ENCODE measurements at regions of chr9 and their contacts with region 1.

Region 1: DNA sequence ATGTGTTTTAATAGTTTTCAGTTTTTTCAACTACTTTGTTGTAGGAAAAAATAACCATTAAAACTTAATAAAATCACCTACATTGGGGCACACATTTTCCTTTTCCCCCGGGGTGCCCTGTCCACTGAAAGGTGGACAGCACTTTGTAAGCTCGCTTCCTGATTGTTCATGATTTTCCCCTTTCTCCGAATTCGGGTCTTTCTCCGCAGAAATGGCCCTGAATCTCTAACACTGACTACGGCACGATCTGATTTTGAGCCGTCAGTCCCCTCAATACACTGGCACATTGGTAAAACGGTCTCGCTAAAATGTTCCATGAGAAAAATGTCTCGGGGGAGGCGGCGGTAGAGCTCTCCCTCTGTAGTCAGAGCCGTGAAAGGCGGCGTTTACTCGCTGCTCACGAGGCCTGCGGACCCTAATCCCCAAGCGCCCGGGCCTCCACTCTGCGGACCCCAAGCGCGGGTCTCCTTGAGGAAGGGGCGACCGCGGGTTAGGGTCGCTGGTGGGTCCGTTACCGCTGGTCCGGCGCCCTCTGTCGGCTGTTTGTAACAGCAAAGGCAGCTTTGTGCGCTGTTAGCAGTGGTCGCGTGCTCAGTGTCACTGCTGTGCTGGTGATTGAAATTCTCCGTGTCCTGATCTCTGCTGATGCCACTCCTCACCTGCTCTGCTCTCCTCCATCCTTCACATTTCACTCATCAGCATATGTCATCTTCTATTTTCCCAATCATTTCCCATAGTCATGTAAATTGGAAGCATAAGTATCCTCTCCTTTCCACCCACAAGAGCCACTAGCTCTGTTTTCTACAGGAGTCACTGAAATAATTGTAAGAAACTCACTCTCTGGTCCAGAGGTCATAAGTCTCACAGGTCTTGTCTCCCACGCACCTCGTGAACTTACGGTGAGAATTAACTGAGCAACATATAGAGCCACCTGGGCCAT is 10.8 kb upstream of the IFNA2 start:
- DNase-seq: peak in 1 of 2 experiments; percentile 58
- H3K4me3 ChIP-seq: peak overlapping the region; percentile 37
- H3K4me3 Mint-ChIP-seq: peak overlapping the region; percentile 48
- H3K27ac Mint-ChIP-seq: no peak overlapping the region
- H3K4me1 ChIP-seq: no peaks in the 10 kb centered on the region
- H3K4me1 Mint-ChIP-seq: no peaks in the 10 kb centered on the region
- H3K27me3 ChIP-seq: no peaks in the 10 kb centered on the region
- H3K27me3 Mint-ChIP-seq: peaks cover 7% of the 10 kb centered on the region
- CTCF ChIP-seq: peak; percentile 70 to 84

Region 2: DNA sequence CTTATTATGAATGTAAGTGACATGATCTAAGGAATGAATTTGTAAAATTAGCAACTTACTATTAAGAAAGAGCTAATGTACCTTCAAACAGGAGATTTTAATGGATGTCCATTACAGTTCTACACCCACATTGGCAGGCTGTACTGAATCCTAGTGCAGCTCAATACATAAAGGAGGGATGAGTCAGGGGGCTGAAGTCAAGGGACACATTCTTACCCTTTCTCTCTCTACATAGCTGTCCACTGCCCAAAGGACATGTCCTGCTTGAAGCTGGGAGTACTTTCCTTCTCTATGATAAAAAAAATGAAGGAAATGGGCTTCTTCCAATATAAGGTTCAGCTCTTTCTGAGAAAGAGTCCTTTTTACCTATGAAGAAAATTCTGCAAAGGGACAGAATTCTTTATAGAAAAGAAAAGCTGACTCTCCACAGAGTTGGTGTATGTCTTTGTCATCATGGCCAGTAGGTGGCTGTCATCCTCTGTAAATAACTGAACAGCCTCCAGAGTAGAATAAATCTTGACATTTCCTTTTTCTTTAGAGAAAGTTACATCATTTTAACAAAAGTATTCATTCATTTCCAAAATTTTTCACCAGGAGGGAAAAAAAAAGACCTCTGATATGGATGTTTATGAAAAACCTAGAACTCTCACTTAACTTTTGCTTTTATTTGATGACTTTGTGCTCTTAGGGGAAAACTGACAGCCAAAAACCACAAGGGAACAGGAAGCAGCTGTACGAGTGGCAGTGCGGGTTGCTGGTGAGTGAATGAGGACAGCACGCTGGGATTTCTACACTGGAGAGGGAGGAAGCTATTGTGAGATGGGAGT is 143.1 kb before region 1 on chr9:
- CTCF ChIA-PET with region 1: interaction called, 6 read pairs
- POLR2A ChIA-PET with region 1: no interaction called
- intact Hi-C with region 1: loop called (anchors 2 kb)
- DNase-seq: peak in 1 of 2 experiments; percentile 4
- H3K4me3 ChIP-seq: no peak overlapping the region
- H3K4me3 Mint-ChIP-seq: no peak overlapping the region
- H3K27ac Mint-ChIP-seq: no peak overlapping the region
- H3K4me1 ChIP-seq: no peaks in the 10 kb centered on the region
- H3K4me1 Mint-ChIP-seq: no peaks in the 10 kb centered on the region
- H3K27me3 ChIP-seq: no peaks in the 10 kb centered on the region
- H3K27me3 Mint-ChIP-seq: peaks cover 7% of the 10 kb centered on the region
- CTCF ChIP-seq: peak; percentile 42 to 43

Region 3: GRCh38 chr9:21317956-21318923 is 77.8 kb before region 1 on chr9:
- CTCF ChIA-PET with region 1: interaction called, 7 read pairs
- POLR2A ChIA-PET with region 1: no interaction called
- intact Hi-C with region 1: loop called (anchors 1 kb)
- DNase-seq: peak in 1 of 2 experiments; percentile 39
- H3K4me3 ChIP-seq: no peak overlapping the region
- H3K4me3 Mint-ChIP-seq: no peak overlapping the region
- H3K27ac Mint-ChIP-seq: no peak overlapping the region
- H3K4me1 ChIP-seq: no peaks in the 10 kb centered on the region
- H3K4me1 Mint-ChIP-seq: peaks cover 5% of the 10 kb centered on the region
- H3K27me3 ChIP-seq: no peaks in the 10 kb centered on the region
- H3K27me3 Mint-ChIP-seq: peaks cover 9% of the 10 kb centered on the region
- CTCF ChIP-seq: peak; percentile 48 to 65

Region 4: DNA sequence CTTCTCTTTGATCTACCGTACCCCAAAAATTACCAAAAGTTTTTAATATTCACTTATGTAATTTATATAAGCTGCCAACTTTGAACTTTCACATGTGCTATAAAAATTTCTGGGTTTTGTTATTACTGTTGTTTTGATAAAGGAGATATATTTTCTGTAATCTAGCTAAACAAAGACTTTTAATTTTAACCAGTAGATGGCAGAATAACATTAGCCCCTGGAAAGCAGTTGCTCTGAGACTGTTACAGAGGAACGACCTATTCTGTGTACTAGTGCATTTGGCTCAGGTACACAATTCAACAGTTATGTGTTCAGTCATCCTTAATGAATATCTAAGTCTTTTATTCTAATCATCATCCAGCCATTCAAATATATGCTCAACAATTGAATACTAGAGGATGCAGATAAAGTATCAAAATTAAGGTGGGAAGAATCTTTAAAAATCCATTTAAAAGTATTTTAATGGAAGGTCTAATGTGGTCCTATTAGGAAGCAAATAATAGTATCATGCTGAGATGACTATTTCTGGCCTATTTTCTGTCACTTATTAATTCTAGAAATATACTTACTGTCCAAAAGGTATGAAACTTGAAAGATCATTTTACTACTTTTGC is 69.4 kb before region 1 on chr9:
- CTCF ChIA-PET with region 1: interaction called, 21 read pairs
- POLR2A ChIA-PET with region 1: no interaction called
- intact Hi-C with region 1: loop called (anchors 1 kb)
- DNase-seq: peak in 1 of 2 experiments; percentile 7
- H3K4me3 ChIP-seq: no peak overlapping the region
- H3K4me3 Mint-ChIP-seq: no peak overlapping the region
- H3K27ac Mint-ChIP-seq: no peak overlapping the region
- H3K4me1 ChIP-seq: no peaks in the 10 kb centered on the region
- H3K4me1 Mint-ChIP-seq: no peaks in the 10 kb centered on the region
- H3K27me3 ChIP-seq: no peaks in the 10 kb centered on the region
- H3K27me3 Mint-ChIP-seq: no peaks in the 10 kb centered on the region
- CTCF ChIP-seq: peak; percentile 27 to 41

Region 5: GRCh38 chr9:21443849-21444625 is 48.0 kb after region 1 on chr9:
- CTCF ChIA-PET with region 1: no interaction called
- POLR2A ChIA-PET with region 1: no interaction called
- intact Hi-C with region 1: no loop called
- DNase-seq: no peak
- H3K4me3 ChIP-seq: no peak overlapping the region
- H3K4me3 Mint-ChIP-seq: no peak overlapping the region
- H3K27ac Mint-ChIP-seq: no peak overlapping the region
- H3K4me1 ChIP-seq: no peaks in the 10 kb centered on the region
- H3K4me1 Mint-ChIP-seq: no peaks in the 10 kb centered on the region
- H3K27me3 ChIP-seq: no peaks in the 10 kb centered on the region
- H3K27me3 Mint-ChIP-seq: no peaks in the 10 kb centered on the region
- CTCF ChIP-seq: no peak

Region 6: GRCh38 chr9:21465859-21466518 is 69.9 kb after region 1 on chr9:
- CTCF ChIA-PET with region 1: no interaction called
- POLR2A ChIA-PET with region 1: no interaction called
- intact Hi-C with region 1: no loop called
- DNase-seq: peak in 1 of 2 experiments; percentile 56
- H3K4me3 ChIP-seq: no peak overlapping the region
- H3K4me3 Mint-ChIP-seq: no peak overlapping the region
- H3K27ac Mint-ChIP-seq: no peak overlapping the region
- H3K4me1 ChIP-seq: no peaks in the 10 kb centered on the region
- H3K4me1 Mint-ChIP-seq: no peaks in the 10 kb centered on the region
- H3K27me3 ChIP-seq: no peaks in the 10 kb centered on the region
- H3K27me3 Mint-ChIP-seq: no peaks in the 10 kb centered on the region
- CTCF ChIP-seq: peak; percentile 49 to 54